PC-3 (cell line): ENCODE measurements at regions of chr5 and their contacts with region 1.

Region 1: GRCh38 chr5:148152781-148153180 is 15.6 kb upstream of the SPINK14 start:
- DNase-seq: no peak
- ATAC-seq: no peak
- H3K4me3 ChIP-seq: no peak overlapping the region
- H3K27ac ChIP-seq: no peak overlapping the region
- H3K4me1 ChIP-seq: peaks cover 20% of the 10 kb centered on the region
- H3K27me3 ChIP-seq: no peaks in the 10 kb centered on the region
- CTCF ChIP-seq: no peak

Region 2: DNA sequence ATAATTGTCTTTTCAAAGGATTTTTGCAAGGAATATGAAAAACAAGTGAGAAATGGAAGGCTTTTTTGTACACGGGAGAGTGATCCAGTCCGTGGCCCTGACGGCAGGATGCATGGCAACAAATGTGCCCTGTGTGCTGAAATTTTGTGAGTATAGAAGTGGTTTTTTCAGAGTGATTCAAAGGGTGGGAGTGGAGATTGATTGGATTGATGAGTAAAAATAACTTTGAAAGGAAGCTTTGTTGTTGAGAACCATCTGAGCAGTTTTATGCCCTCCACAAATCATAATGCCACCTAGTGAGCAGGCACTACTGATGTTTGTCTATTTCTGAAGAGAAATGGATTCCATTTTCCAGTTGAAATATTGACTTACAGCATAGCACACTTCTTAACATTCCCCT is 58.4 kb before region 1 on chr5:
- CTCF ChIA-PET with region 1: no interaction called
- POLR2A ChIA-PET with region 1: no interaction called
- intact Hi-C with region 1: no loop called
- DNase-seq: no peak
- ATAC-seq: no peak
- H3K4me3 ChIP-seq: no peak overlapping the region
- H3K27ac ChIP-seq: no peak overlapping the region
- H3K4me1 ChIP-seq: peaks cover 22% of the 10 kb centered on the region
- H3K27me3 ChIP-seq: no peaks in the 10 kb centered on the region
- CTCF ChIP-seq: no peak

Region 3: GRCh38 chr5:148166550-148167283 is 13.9 kb after region 1 on chr5:
- CTCF ChIA-PET with region 1: no interaction called
- POLR2A ChIA-PET with region 1: no interaction called
- intact Hi-C with region 1: loop called (anchors 2 kb)
- DNase-seq: no peak
- ATAC-seq: peak; percentile 70
- H3K4me3 ChIP-seq: no peak overlapping the region
- H3K27ac ChIP-seq: no peak overlapping the region
- H3K4me1 ChIP-seq: peaks cover 15% of the 10 kb centered on the region
- H3K27me3 ChIP-seq: no peaks in the 10 kb centered on the region
- CTCF ChIP-seq: no peak